ENCODE measurements at regions of chr1 and their contacts with region 1.

Region 1: GRCh38 chr1:27284425-27285273 is 37.3 kb upstream of the TMEM222 start:
- DNase-seq: peak; percentile 88
- H3K4me3 ChIP-seq: no peak overlapping the region
- H3K27ac ChIP-seq: no peak overlapping the region
- H3K4me1 ChIP-seq: no peaks in the 10 kb centered on the region
- CTCF ChIP-seq: peak; percentile 94

Region 2: DNA sequence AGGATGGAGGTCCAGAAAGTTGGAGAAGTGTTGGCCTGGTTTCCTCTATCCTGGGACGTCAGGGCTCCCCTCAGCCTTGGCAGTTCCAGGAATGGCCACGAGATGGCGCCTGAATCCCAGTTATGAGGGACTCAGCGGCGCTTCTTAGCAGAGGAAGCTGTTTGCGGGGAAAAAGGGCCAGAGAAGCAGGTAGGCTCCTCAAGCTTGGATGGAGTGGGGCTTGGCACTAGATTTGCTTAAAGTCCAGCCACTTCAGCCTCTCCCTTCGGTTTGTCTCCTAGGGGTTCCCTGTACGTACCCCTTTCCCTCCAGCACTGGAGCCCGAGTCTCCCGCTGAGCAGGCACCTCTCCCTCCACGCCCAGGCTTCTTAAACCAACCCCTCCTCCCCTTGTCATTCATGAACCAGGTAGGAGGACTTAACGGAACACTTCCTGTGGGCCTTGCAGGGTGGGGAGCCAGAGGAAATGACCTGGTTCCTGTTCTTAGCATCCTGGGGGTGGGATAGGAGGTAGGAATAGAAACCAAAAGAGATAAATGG is 240.0 kb before region 1 on chr1:
- CTCF ChIA-PET with region 1: interaction called, 5 read pairs
- POLR2A ChIA-PET with region 1: no interaction called
- intact Hi-C with region 1: loop called (anchors 2 kb)
- DNase-seq: peak; percentile 86
- H3K4me3 ChIP-seq: no peak overlapping the region
- H3K27ac ChIP-seq: no peak overlapping the region
- H3K4me1 ChIP-seq: peaks cover 12% of the 10 kb centered on the region
- CTCF ChIP-seq: peak; percentile 88

Region 3: DNA sequence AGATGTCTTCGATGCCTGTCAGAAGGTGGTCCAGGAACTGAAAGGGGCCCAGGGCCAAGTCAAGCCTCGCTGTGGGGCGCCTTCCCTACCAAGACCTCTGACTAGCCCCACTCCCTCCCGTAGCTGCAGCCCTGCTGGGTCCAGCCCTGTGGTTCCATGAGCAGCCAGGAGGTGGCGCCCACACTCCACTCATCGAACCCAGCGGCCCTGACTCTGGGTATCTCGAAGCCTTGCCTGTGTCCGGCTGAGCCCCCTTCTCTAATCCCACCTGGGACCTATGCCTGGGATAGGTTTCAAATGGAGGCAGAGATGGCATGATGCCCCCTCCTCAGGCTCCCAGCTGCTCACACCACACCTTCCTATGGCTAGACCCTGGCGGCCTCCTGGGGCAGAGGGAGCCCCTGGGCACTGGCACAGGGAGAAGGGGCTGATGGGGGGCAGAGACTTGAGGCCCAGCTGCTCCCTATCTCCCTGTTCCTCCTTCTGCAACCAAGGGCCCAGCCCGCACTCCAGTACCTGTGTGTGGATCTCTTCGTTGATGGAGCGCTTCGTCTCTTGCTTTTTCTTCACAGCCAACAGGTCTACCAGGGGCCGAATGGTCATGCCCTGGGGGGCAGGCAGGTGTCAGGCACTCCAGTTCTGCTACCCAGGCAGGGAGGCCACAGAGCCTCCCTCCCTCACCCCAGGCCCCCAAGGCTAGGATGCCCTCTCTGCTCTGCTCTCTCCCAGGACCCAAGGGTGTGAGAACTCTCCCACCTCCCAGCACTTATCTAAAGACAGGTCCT is 181.8 kb before region 1 on chr1:
- CTCF ChIA-PET with region 1: interaction called, 3 read pairs
- POLR2A ChIA-PET with region 1: no interaction called
- intact Hi-C with region 1: loop called (anchors 1 kb)
- DNase-seq: peak; percentile 70
- H3K4me3 ChIP-seq: no peak overlapping the region
- H3K27ac ChIP-seq: no peak overlapping the region
- H3K4me1 ChIP-seq: peaks cover 24% of the 10 kb centered on the region
- CTCF ChIP-seq: peak; percentile 92

Region 4: GRCh38 chr1:27201295-27201694 is 83.4 kb before region 1 on chr1:
- CTCF ChIA-PET with region 1: no interaction called
- POLR2A ChIA-PET with region 1: no interaction called
- intact Hi-C with region 1: loop called (anchors 1 kb)
- DNase-seq: no peak
- H3K4me3 ChIP-seq: no peak overlapping the region
- H3K27ac ChIP-seq: no peak overlapping the region
- H3K4me1 ChIP-seq: no peaks in the 10 kb centered on the region
- CTCF ChIP-seq: no peak

Measured in OCI-LY7 (cell line).